Body of pancreas (tissue), 4 donors: ENCODE measurements at regions of chr5 and their contacts with region 1.

Region 1: GRCh38 chr5:135829681-135830383 is 4.6 kb upstream of the SLC25A48 start:
- DNase-seq: peak; percentile 66 to 79 (median 72)
- ATAC-seq: peak; percentile 27
- H3K4me3 ChIP-seq: no peak overlapping the region
- H3K27ac ChIP-seq: no peak overlapping the region
- H3K4me1 ChIP-seq: peaks cover 10% of the 10 kb centered on the region
- H3K27me3 ChIP-seq: no peaks in the 10 kb centered on the region
- CTCF ChIP-seq: peak; percentile 54 to 73 (median 66)
- POLR2A ChIP-seq: no peak

Region 2: DNA sequence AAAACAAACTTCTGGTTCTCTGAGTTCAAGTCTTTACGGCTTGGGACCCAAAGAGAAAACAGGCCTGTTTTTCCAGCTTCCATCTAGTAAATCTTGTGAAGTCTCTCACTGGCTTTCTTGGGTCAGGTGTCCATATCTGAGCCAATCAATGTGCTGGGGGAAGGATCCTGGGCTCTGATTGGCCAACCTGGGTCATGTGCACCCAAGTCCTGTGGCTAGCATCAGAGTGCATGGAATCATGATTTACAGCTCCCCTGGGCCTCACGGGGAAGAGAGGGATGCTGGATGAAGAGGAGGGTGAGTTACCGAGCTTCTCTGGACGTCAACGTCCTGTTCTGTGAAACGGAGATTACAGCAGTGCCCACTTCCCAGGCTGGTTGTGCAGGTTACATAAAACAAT is 270.5 kb before region 1 on chr5:
- intact Hi-C with region 1: loop called (anchors 5 kb)
- DNase-seq: no peak
- ATAC-seq: no peak
- H3K4me3 ChIP-seq: no peak overlapping the region
- H3K27ac ChIP-seq: no peak overlapping the region
- H3K4me1 ChIP-seq: no peaks in the 10 kb centered on the region
- H3K27me3 ChIP-seq: peaks cover 0 to 3% of the 10 kb centered on the region in 2 donors
- CTCF ChIP-seq: no peak
- POLR2A ChIP-seq: no peak

Region 3: DNA sequence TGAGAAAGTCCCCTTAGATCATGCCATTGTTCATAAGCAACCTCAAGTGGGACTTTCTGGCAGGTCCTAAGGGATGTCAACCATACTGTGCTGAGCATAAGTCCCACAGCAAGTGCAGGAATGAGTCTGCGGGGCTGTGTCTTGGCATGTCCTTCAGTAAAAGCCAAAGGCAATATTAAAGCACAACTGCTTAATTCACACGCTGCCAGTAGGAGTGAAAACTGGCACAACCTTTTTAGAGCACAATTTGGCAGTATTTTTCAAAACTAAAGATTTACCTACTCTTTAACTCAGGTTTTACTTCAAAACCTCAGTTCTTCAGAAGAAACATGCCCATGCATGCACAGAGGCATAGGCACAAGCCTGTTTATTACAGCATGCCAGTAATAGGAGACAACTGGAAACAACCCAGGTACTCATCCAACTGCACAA is 278.4 kb after region 1 on chr5:
- intact Hi-C with region 1: no loop called
- DNase-seq: peak in 3 of 4 donors; percentile 18 to 52 (median 47)
- ATAC-seq: no peak
- H3K4me3 ChIP-seq: no peak overlapping the region
- H3K27ac ChIP-seq: no peak overlapping the region
- H3K4me1 ChIP-seq: peaks cover 21% of the 10 kb centered on the region
- H3K27me3 ChIP-seq: no peaks in the 10 kb centered on the region
- CTCF ChIP-seq: peak in 2 of 7 experiments; percentile 23 to 30
- POLR2A ChIP-seq: no peak